Natural killer cell (primary cell): ENCODE measurements at regions of chr20 and their contacts with region 1.

Region 1: DNA sequence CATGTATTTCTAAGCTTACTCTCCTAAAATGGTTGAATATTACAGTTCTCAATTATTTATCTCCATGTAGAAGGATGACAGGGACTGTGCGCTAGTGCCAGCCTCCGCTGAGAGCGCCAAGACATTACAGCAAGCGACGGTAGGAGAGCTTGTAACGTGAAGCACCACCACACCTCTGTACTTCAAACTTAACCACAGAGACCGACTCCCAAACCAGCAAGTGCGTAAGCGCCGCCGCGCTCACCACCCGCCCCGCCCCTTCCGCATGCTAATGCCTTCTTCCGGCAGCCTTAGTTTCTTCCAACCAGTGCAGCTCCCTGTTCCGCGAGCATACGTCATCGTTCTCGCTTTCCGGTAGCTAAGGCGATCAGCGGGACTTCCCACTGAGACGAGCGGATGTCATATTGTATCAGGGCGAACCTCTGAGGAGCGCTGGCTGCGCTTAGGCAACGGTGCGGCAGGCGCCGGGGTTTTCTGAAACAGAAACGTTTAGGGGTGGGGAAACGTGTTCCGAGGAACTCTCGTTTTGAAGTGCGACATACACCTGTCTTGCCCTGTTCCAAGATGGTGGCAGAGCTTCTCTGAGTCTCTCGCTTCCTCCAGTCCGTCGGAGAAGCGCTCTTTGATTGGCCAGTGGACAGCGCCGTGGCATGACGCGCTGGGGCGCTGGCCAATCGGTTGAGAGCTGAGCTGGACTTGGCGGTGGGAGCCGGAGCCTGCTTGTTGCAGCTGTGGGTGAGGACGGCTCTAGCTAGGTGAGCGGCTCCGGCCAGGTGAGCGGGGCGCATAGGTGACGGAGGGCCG is at the start of gene SEC23B:
- DNase-seq: peak; percentile 99
- ATAC-seq: peak; percentile 84 to 94 (median 86)
- H3K4me3 ChIP-seq: peak within 1 kb of the TSS; percentile 77
- H3K4me3 Mint-ChIP-seq: peak within 1 kb of the TSS; percentile 100
- H3K27ac ChIP-seq: peak within 1 kb of the TSS; percentile 99
- H3K27ac Mint-ChIP-seq: peak within 1 kb of the TSS; percentile 100
- H3K4me1 ChIP-seq: peaks cover 18% of the 10 kb centered on the region
- H3K4me1 Mint-ChIP-seq: peaks cover 38 to 44% of the 10 kb centered on the region in 2 donors
- H3K27me3 ChIP-seq: peaks cover 3% of the 10 kb centered on the region
- H3K27me3 Mint-ChIP-seq: peaks cover 7 to 12% of the 10 kb centered on the region in 2 donors
- CTCF ChIP-seq: no peak
- total RNA-seq, gene SEC23B: 58.2 to 68.8 (median 63.9) TPM

Region 2: GRCh38 chr20:17968366-17969279 is 538.8 kb before region 1 on chr20 and contains the starts of genes MGME1 and SNX5:
- intact Hi-C with region 1: loop called (anchors 5 kb)
- DNase-seq: peak; percentile 99
- ATAC-seq: peak; percentile 87 to 97 (median 91)
- H3K4me3 ChIP-seq: peak within 1 kb of the TSS; percentile 88
- H3K4me3 Mint-ChIP-seq: peak within 1 kb of the TSS; percentile 98
- H3K27ac ChIP-seq: peak within 1 kb of the TSS; percentile 99
- H3K27ac Mint-ChIP-seq: peak within 1 kb of the TSS; percentile 95 to 98
- H3K4me1 ChIP-seq: peaks cover 40% of the 10 kb centered on the region
- H3K4me1 Mint-ChIP-seq: peaks cover 80 to 83% of the 10 kb centered on the region in 2 donors
- H3K27me3 ChIP-seq: no peaks in the 10 kb centered on the region
- H3K27me3 Mint-ChIP-seq: no peaks in the 10 kb centered on the region
- CTCF ChIP-seq: no peak
- total RNA-seq, gene MGME1: 10.3 to 25.1 (median 13.0) TPM
- total RNA-seq, gene SNX5: 62.3 to 85.4 (median 72.1) TPM

Region 3: GRCh38 chr20:18412221-18412901 is 95.1 kb before region 1 on chr20:
- intact Hi-C with region 1: loop called (anchors 1 kb)
- DNase-seq: no peak
- ATAC-seq: no peak
- H3K4me3 ChIP-seq: no peak overlapping the region
- H3K4me3 Mint-ChIP-seq: no peak overlapping the region
- H3K27ac ChIP-seq: no peak overlapping the region
- H3K27ac Mint-ChIP-seq: no peak overlapping the region
- H3K4me1 ChIP-seq: no peaks in the 10 kb centered on the region
- H3K4me1 Mint-ChIP-seq: peaks cover 5% of the 10 kb centered on the region in 2 donors
- H3K27me3 ChIP-seq: no peaks in the 10 kb centered on the region
- H3K27me3 Mint-ChIP-seq: no peaks in the 10 kb centered on the region
- CTCF ChIP-seq: no peak

Region 4: GRCh38 chr20:18566892-18567742 is 59.7 kb after region 1 on chr20 and contains the start of gene SMIM26:
- intact Hi-C with region 1: loop called (anchors 1 kb)
- DNase-seq: peak; percentile 90 to 97
- ATAC-seq: peak; percentile 98 to 99 (median 99)
- H3K4me3 ChIP-seq: peak within 1 kb of the TSS; percentile 59
- H3K4me3 Mint-ChIP-seq: peak within 1 kb of the TSS; percentile 98
- H3K27ac ChIP-seq: peak within 1 kb of the TSS; percentile 81
- H3K27ac Mint-ChIP-seq: peak within 1 kb of the TSS; percentile 94 to 97
- H3K4me1 ChIP-seq: peaks cover 11% of the 10 kb centered on the region
- H3K4me1 Mint-ChIP-seq: peaks cover 15 to 29% of the 10 kb centered on the region in 2 donors
- H3K27me3 ChIP-seq: no peaks in the 10 kb centered on the region
- H3K27me3 Mint-ChIP-seq: no peaks in the 10 kb centered on the region
- CTCF ChIP-seq: no peak
- total RNA-seq, gene SMIM26: 38.6 to 48.8 (median 40.5) TPM

Region 5: DNA sequence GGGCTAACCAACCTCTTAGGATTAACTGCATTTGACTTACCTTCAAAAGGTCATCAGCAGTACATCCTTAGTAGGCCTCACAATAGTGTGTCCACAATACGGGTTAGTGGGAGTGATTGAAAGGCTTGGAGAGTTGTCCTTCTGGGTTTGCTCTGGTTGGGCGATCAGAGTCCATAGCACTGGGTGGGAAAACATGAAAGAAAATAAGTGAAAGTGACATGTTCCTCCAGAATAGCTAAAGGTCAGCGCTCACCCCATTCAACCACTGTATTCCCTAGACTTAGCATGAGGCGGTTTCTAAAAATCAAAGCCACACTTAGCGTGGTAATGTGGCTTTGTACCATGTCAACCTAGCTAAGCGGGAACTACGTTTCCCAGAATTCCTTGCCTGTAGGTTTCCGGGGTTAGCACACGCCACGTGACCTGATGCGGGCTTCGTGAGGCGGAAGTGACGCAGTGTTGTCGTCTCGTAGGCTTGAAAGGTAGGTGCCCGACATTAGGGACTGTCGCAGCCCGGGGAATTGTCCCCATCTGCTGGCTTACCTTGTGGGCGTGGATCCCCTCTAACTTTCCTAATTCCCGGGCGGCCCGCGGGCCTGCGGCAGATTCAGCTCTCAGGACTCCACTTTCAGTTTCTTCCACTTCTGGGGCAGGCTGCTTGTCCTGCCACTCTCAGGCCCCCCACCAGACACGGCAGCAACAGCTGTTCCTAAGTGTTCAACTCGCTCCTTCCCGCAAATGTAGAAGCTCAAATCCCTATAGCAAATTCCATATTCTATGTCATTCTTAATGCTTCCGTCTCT is 286.4 kb after region 1 on chr20:
- intact Hi-C with region 1: loop called (anchors 5 kb)
- DNase-seq: peak; percentile 79 to 98
- ATAC-seq: peak; percentile 91 to 97 (median 95)
- H3K4me3 ChIP-seq: peak overlapping the region; percentile 71
- H3K4me3 Mint-ChIP-seq: peak overlapping the region; percentile 95
- H3K27ac ChIP-seq: peak overlapping the region; percentile 92
- H3K27ac Mint-ChIP-seq: peak overlapping the region; percentile 98
- H3K4me1 ChIP-seq: peaks cover 12% of the 10 kb centered on the region
- H3K4me1 Mint-ChIP-seq: peaks cover 18 to 19% of the 10 kb centered on the region in 2 donors
- H3K27me3 ChIP-seq: peaks cover 2% of the 10 kb centered on the region
- H3K27me3 Mint-ChIP-seq: peaks cover 6 to 43% of the 10 kb centered on the region in 2 donors
- CTCF ChIP-seq: no peak